Caco-2 (cell line): ENCODE measurements at regions of chr13 and their contacts with region 1.

Region 1: DNA sequence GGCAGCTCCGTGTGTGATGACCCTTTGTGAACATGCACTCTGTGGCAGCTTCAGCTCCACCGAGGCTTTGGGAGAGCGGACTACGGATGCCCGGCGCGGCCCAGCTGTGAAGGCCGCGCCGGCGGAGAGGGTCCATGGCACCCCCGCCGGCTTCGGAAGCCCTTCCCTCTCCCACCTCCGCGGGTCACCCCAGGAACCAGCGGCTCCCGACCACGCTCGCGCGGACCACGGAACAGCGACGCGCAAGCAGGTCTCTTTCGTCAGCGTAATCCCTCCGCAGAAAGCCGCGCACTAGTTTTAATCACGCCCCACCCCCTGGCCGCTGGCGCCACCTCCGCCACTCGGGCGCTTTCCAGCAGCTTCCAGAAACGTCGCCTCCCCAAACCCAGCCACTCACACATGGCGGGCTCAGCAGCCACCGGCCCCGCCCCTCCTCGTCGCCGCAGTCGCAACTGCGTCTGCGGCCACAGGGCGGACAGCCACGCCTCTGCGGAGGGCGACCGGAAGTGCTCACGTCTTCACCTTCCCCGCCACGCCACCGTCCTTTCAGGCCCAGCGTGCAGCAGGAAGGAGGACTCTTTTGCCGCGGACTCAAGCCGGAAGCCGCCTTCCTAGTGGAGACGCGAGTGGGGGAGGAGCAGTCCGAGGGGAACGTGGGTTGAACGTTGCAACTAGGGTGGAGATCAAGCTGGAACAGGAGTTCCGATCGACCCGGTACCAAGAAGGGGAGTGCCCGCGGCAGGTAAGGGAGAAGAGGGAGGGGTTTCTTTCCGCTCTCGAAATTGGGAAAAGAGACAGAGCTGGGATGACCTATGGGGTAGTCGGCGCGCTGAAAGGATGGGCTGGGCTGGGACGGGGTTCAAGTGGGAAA is at the start of gene USPL1:
- DNase-seq: peak; percentile 99
- H3K4me3 ChIP-seq: peak within 1 kb of the TSS; percentile 61
- H3K4me3 Mint-ChIP-seq: no peak within 1 kb of the TSS
- H3K27ac Mint-ChIP-seq: no peak within 1 kb of the TSS
- H3K4me1 ChIP-seq: 0 out of 2 replicates have a peak, but pooled peaks cover 8% of the 10 kb centered on the region
- H3K4me1 Mint-ChIP-seq: no peaks in the 10 kb centered on the region
- H3K27me3 ChIP-seq: no peaks in the 10 kb centered on the region
- H3K27me3 Mint-ChIP-seq: no peaks in the 10 kb centered on the region
- CTCF ChIP-seq: no peak
- total RNA-seq, gene USPL1: 23.4 and 26.7 TPM in 2 replicates

Region 2: DNA sequence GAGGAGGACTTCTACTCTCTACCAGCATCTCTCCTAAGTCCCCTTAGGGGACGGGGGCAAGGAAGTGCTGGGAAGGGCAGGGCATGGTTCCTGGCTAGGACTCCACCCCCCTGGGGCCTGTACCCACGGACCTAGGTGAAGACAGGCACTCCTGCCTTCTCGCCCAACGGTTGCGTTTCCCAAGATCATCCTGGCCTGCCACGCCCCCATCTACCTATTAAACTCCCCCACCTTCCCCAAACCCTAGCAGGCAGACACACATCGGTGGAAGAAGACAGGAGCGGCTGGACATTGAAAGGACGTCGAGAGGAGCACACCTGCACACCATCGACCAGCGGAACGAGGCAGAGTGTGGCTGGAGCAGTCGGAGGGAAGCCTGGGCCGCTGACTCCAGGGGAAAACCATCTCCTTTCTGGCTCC is 72.2 kb after region 1 on chr13:
- CTCF ChIA-PET with region 1: no interaction called
- POLR2A ChIA-PET with region 1: interaction called, 15 read pairs
- intact Hi-C with region 1: no loop called
- DNase-seq: no peak
- H3K4me3 ChIP-seq: no peak overlapping the region
- H3K4me3 Mint-ChIP-seq: peak overlapping the region; percentile 72
- H3K27ac Mint-ChIP-seq: no peak overlapping the region
- H3K4me1 ChIP-seq: no peaks in the 10 kb centered on the region
- H3K4me1 Mint-ChIP-seq: no peaks in the 10 kb centered on the region
- H3K27me3 ChIP-seq: no peaks in the 10 kb centered on the region
- H3K27me3 Mint-ChIP-seq: peaks cover 1% of the 10 kb centered on the region
- CTCF ChIP-seq: no peak

Region 3: DNA sequence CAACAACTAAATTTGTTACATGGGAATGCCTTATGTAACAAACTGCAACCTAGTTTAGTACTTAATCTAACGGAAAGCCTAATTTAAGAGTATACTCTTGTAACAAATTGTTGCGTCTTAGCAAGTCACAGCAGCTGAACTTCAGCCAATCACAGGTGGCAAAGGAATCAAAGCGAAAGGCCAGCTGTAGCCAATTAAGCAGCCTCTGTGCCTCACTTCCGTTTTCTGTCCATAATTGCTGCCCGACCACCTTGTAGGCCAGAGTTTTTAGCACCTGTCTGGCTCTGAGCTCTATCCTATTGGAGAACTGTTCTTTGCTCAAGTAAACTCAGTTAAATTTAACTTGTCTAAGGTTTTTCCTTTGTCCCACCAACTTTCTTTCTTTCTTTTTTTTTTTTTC is 562.2 kb after region 1 on chr13:
- CTCF ChIA-PET with region 1: no interaction called
- POLR2A ChIA-PET with region 1: no interaction called
- intact Hi-C with region 1: no loop called
- DNase-seq: no peak
- H3K4me3 ChIP-seq: no peak overlapping the region
- H3K4me3 Mint-ChIP-seq: no peak overlapping the region
- H3K27ac Mint-ChIP-seq: no peak overlapping the region
- H3K4me1 ChIP-seq: no peaks in the 10 kb centered on the region
- H3K4me1 Mint-ChIP-seq: no peaks in the 10 kb centered on the region
- H3K27me3 ChIP-seq: no peaks in the 10 kb centered on the region
- H3K27me3 Mint-ChIP-seq: no peaks in the 10 kb centered on the region
- CTCF ChIP-seq: no peak